ENCODE measurements at regions of chr11 and their contacts with region 1.

Region 1: GRCh38 chr11:62905927-62906531 is 15.1 kb downstream of the CHRM1 start:
- H3K4me3 ChIP-seq: no peak overlapping the region
- H3K27ac ChIP-seq: no peak overlapping the region
- H3K4me1 ChIP-seq: no peaks in the 10 kb centered on the region
- CTCF ChIP-seq: peak; percentile 96

Region 2: GRCh38 chr11:62875698-62876478 is 30.1 kb before region 1 on chr11:
- CTCF ChIA-PET with region 1: no interaction called
- POLR2A ChIA-PET with region 1: no interaction called
- H3K4me3 ChIP-seq: no peak overlapping the region
- H3K27ac ChIP-seq: no peak overlapping the region
- H3K4me1 ChIP-seq: no peaks in the 10 kb centered on the region
- CTCF ChIP-seq: no peak

Region 3: DNA sequence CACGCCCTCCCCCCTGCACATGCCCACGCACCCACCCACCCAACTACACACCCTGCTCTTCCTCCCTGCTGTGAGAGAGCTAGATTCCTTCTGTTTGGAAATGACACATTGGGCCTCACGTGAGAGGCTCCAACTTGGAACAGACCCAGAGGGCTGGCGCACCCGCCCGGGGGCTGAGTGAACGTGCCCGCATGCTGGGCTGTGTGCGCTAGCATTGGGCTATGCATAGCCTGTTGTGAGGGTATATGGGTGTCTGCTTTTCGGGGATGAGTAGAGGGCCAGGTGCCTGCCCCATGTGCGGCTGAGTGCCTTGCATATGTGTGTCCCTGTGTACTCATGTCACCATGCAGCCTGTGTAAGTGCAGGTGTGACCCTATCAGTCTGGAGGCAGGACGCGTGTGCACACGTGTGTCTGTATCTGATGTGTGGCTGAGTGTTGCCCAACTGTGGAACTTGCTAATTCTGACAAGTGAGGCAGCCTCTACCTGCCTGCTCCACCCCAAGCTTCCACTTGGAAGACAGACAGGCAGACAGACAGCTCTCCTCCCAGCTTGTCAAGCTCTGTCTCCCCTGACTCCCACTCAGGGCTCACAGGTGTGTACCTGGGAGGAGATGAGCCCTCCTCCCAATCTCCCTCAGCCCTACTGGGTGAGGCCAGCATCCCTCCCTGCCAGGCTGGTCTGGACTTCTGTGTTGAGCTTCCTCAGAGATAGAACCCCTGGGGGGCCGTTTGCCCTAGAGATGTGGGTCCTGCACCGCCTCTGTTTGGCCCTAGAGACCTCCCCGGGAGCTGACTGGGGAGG is 16.0 kb after region 1 on chr11:
- CTCF ChIA-PET with region 1: interaction called, 33 read pairs
- POLR2A ChIA-PET with region 1: no interaction called
- H3K4me3 ChIP-seq: no peak overlapping the region
- H3K27ac ChIP-seq: no peak overlapping the region
- H3K4me1 ChIP-seq: peaks cover 4% of the 10 kb centered on the region; the same call in 1 of the 2 replicates
- CTCF ChIP-seq: no peak

Region 4: GRCh38 chr11:62974848-62975522 is 69.0 kb after region 1 on chr11:
- CTCF ChIA-PET with region 1: interaction called, 143 read pairs
- POLR2A ChIA-PET with region 1: interaction called, 12 read pairs
- H3K4me3 ChIP-seq: no peak overlapping the region
- H3K27ac ChIP-seq: no peak overlapping the region
- H3K4me1 ChIP-seq: no peaks in the 10 kb centered on the region
- CTCF ChIP-seq: peak; percentile 74; the same call in 1 of the 2 replicates

Region 5: GRCh38 chr11:63015521-63016215 is 109.6 kb after region 1 on chr11 and contains the start of gene SLC22A8:
- CTCF ChIA-PET with region 1: interaction called, 450 read pairs
- POLR2A ChIA-PET with region 1: interaction called, 6 read pairs
- H3K4me3 ChIP-seq: no peak within 1 kb of the TSS
- H3K27ac ChIP-seq: no peak within 1 kb of the TSS
- H3K4me1 ChIP-seq: no peaks in the 10 kb centered on the region; the same call in 1 of the 2 replicates
- CTCF ChIP-seq: no peak

Region 6: GRCh38 chr11:63032457-63032856 is 126.4 kb after region 1 on chr11:
- CTCF ChIA-PET with region 1: interaction called, 67 read pairs
- POLR2A ChIA-PET with region 1: no interaction called
- H3K4me3 ChIP-seq: no peak overlapping the region
- H3K27ac ChIP-seq: no peak overlapping the region
- H3K4me1 ChIP-seq: no peaks in the 10 kb centered on the region
- CTCF ChIP-seq: no peak

Region 7: DNA sequence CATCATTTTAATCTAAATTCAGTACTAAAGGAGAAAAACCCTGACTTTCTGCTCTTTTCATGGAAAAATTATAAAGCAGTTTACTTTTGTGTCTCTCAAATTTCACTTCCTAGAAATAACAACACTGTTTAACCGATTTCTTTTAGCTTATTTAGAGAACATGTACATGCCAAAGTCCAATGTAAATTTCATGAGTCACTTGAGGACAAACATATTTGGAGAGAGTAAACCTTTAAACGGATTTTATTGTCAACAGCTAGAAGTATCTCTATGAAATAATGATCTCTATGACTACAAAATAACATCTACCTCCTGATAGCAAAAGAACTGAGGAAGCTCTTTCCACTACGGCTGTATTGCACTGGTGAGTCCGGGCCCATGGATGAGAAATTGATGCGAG is 383.6 kb after region 1 on chr11:
- CTCF ChIA-PET with region 1: no interaction called
- POLR2A ChIA-PET with region 1: no interaction called
- H3K4me3 ChIP-seq: no peak overlapping the region
- H3K27ac ChIP-seq: no peak overlapping the region
- H3K4me1 ChIP-seq: no peaks in the 10 kb centered on the region
- CTCF ChIP-seq: no peak

Measured in HEK293 (cell line).